Heart right ventricle (tissue), 16 donors: ENCODE measurements at regions of chr7 and their contacts with region 1.

Region 1: DNA sequence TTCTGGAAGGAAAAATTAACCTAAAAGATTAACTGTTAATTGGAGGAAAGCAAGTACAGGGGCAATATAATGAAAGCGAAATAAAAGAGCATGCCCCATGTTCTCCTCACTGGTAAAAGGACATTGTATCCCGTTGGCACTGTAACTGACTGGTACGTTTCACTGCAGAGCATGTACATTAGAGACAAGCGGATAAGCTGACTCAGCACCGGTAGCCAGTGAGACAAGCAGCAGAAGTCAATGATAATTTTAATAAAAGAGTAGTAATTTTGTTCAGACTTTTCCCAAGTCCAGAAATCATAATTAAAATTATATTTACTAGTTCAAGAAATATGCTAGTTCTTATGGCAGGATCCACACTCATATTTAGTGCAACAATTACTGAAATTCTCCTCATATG is 161.5 kb upstream of the VWC2 start:
- DNase-seq: no peak
- ATAC-seq: no peak
- H3K4me3 ChIP-seq: no peak overlapping the region
- H3K27ac ChIP-seq: no peak overlapping the region
- H3K4me1 ChIP-seq: no peaks in the 10 kb centered on the region
- H3K27me3 ChIP-seq: no peaks in the 10 kb centered on the region
- CTCF ChIP-seq: no peak

Region 2: GRCh38 chr7:49583440-49583839 is 28.5 kb before region 1 on chr7:
- intact Hi-C with region 1: loop called in 1 of 10 experiments (anchors 2 kb)
- DNase-seq: no peak
- ATAC-seq: no peak
- H3K4me3 ChIP-seq: no peak overlapping the region
- H3K27ac ChIP-seq: no peak overlapping the region
- H3K4me1 ChIP-seq: no peaks in the 10 kb centered on the region
- H3K27me3 ChIP-seq: no peaks in the 10 kb centered on the region
- CTCF ChIP-seq: no peak

Region 3: GRCh38 chr7:49812534-49812933 is 200.6 kb after region 1 on chr7:
- intact Hi-C with region 1: no loop called
- DNase-seq: no peak
- ATAC-seq: peak in 1 of 8 donors; percentile 50
- H3K4me3 ChIP-seq: no peak overlapping the region
- H3K27ac ChIP-seq: no peak overlapping the region
- H3K4me1 ChIP-seq: peaks cover 0 to 14% (median 0%) of the 10 kb centered on the region in 9 donors
- H3K27me3 ChIP-seq: no peaks in the 10 kb centered on the region
- CTCF ChIP-seq: no peak

Region 4: DNA sequence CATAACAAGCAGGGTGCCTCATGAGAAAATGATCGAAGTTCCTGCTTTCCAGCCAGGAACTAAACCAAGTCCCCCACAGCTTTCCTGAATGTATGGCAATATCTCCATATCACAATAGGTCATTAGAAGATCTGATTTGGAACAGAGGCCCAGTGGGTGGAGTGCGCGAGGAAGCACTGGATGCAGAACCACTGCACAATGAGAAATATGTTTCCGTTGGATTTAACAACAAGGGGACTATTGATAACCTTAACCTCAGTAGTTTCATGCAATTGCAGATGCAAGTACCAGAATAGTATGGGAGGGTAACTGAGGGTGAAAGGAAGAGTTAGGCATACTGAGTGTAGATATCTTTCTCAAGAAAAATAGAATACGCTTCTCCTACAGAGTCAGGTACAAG is 435.8 kb after region 1 on chr7:
- intact Hi-C with region 1: no loop called
- DNase-seq: no peak
- ATAC-seq: no peak
- H3K4me3 ChIP-seq: no peak overlapping the region
- H3K27ac ChIP-seq: no peak overlapping the region
- H3K4me1 ChIP-seq: no peaks in the 10 kb centered on the region
- H3K27me3 ChIP-seq: peaks cover 0 to 4% (median 0%) of the 10 kb centered on the region in 7 donors
- CTCF ChIP-seq: no peak